ENCODE measurements at regions of chr1 and their contacts with region 1.

Region 1: DNA sequence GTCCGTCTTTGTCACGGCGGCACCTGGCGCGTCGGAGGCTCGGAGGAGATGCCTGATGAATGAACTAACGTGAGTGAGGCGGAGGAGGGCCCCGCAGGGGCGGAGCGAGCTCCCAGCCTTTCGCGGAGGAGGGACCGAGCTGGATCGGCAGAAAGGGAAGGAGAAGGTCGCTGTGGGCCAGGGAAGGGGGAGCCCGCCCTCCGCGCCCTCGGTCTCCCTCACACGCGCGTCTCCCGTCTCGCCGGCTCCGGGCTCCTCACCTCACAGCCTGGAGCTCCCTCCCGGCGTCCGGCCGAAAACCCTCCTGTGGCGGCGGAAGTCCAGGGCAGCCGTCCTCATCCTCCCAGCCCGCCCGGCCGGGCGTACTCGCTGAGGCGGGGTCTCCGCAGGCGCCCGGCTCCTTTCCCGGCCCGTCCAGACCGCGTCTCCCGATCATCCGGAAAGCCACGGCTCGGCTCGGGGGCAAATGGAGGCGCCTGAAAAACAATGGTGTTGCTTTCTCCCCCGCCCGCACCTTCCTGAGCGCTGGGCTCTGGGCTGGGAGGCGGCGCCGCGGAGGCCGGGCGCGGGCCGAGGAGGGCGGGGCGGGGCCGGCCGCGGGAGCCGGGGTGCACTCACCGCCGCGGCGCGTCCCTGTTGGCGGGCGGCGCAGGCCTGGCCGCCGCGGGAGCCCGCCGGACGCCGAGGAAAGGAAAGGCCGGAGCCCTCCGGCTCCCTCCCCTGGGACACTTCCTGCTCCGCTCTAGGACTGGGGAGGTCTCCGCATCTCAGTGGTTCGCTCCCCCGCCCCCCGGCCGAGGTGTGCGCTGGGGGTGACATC is at the start of gene ZNF496:
- DNase-seq: peak; percentile 35 to 80 (median 60)
- ATAC-seq: peak; percentile 75
- H3K4me3 ChIP-seq: peak within 1 kb of the TSS; percentile 85
- H3K4me3 Mint-ChIP-seq: peak within 1 kb of the TSS; percentile 97
- H3K27ac ChIP-seq: peak within 1 kb of the TSS in 1 of 2 donors; percentile 9
- H3K27ac Mint-ChIP-seq: peak within 1 kb of the TSS; percentile 61
- H3K4me1 ChIP-seq: peaks cover 21% of the 10 kb centered on the region
- H3K4me1 Mint-ChIP-seq: peaks cover 50% of the 10 kb centered on the region
- H3K27me3 ChIP-seq: no peaks in the 10 kb centered on the region
- H3K27me3 Mint-ChIP-seq: no peaks in the 10 kb centered on the region
- CTCF ChIP-seq: no peak
- total RNA-seq, gene ZNF496: 15.8 to 19.9 TPM

Region 2: GRCh38 chr1:247210376-247211117 is 120.8 kb before region 1 on chr1:
- CTCF ChIA-PET with region 1: no interaction called
- POLR2A ChIA-PET with region 1: interaction called, 10 read pairs
- intact Hi-C with region 1: loop called (anchors 5 to 10 kb)
- DNase-seq: peak; percentile 83 to 97 (median 92)
- ATAC-seq: peak; percentile 99
- H3K4me3 ChIP-seq: peak overlapping the region; percentile 79
- H3K4me3 Mint-ChIP-seq: peak overlapping the region; percentile 98
- H3K27ac ChIP-seq: peak overlapping the region; percentile 63 to 79
- H3K27ac Mint-ChIP-seq: peak overlapping the region; percentile 96
- H3K4me1 ChIP-seq: peaks cover 39% of the 10 kb centered on the region
- H3K4me1 Mint-ChIP-seq: peaks cover 76% of the 10 kb centered on the region
- H3K27me3 ChIP-seq: no peaks in the 10 kb centered on the region
- H3K27me3 Mint-ChIP-seq: no peaks in the 10 kb centered on the region
- CTCF ChIP-seq: no peak

Region 3: GRCh38 chr1:247448107-247448791 is 116.9 kb after region 1 on chr1:
- CTCF ChIA-PET with region 1: no interaction called
- POLR2A ChIA-PET with region 1: no interaction called
- intact Hi-C with region 1: no loop called
- DNase-seq: peak in 11 of 14 experiments; percentile 10 to 62 (median 26)
- ATAC-seq: no peak
- H3K4me3 ChIP-seq: peak overlapping the region; percentile 26
- H3K4me3 Mint-ChIP-seq: no peak overlapping the region
- H3K27ac ChIP-seq: no peak overlapping the region
- H3K27ac Mint-ChIP-seq: no peak overlapping the region
- H3K4me1 ChIP-seq: no peaks in the 10 kb centered on the region
- H3K4me1 Mint-ChIP-seq: peaks cover 7% of the 10 kb centered on the region
- H3K27me3 ChIP-seq: no peaks in the 10 kb centered on the region
- H3K27me3 Mint-ChIP-seq: no peaks in the 10 kb centered on the region
- CTCF ChIP-seq: no peak

Measured in CD4-positive, alpha-beta T cell (primary cell).